ENCODE measurements at regions of chr21 and their contacts with region 1.

Region 1: DNA sequence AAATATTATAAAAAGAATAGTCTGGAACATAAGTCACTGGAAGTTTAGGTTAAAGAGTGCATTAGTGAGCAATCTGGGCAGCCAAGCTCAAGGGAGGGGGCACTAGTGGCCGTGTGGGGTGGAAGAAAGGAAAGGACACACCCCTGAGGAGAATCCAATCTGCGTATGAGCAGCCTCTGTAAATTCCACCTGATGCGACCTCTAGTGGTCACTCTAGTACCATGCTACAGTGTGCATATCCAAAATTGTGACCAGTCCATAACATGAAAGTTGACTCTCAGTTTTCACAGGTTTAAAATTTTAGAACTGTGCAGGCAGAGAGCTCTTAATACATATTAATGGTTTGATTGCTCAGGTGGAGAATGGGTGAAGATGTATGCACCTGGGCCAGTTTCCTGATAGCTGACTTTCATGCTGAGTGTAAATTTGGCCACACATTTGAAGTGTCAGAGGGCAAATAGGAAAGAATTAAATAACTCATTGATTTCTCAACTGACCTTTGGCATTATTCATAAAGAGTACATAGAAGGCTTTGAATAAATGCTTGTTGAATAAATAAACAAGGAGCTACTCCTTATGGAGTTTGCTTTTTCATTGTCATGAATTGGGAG is 105.9 kb upstream of the C21orf91 start:
- DNase-seq: peak in 3 of 6 donors; percentile 25 to 60 (median 31)
- ATAC-seq: peak; percentile 91 to 96 (median 95)
- H3K4me3 ChIP-seq: no peak overlapping the region
- H3K27ac ChIP-seq: no peak overlapping the region
- H3K4me1 ChIP-seq: no peaks in the 10 kb centered on the region
- H3K27me3 ChIP-seq: no peaks in the 10 kb centered on the region
- CTCF ChIP-seq: peak; percentile 57 to 88 (median 81)

Region 2: GRCh38 chr21:17688912-17689874 is 235.9 kb before region 1 on chr21:
- intact Hi-C with region 1: loop called in 1 of 3 experiments (anchors 10 kb)
- DNase-seq: peak in 4 of 6 donors; percentile 13 to 27 (median 22)
- ATAC-seq: peak in 3 of 4 donors; percentile 49 to 75 (median 71)
- H3K4me3 ChIP-seq: no peak overlapping the region
- H3K27ac ChIP-seq: no peak overlapping the region
- H3K4me1 ChIP-seq: no peaks in the 10 kb centered on the region
- H3K27me3 ChIP-seq: no peaks in the 10 kb centered on the region
- CTCF ChIP-seq: no peak

Region 3: DNA sequence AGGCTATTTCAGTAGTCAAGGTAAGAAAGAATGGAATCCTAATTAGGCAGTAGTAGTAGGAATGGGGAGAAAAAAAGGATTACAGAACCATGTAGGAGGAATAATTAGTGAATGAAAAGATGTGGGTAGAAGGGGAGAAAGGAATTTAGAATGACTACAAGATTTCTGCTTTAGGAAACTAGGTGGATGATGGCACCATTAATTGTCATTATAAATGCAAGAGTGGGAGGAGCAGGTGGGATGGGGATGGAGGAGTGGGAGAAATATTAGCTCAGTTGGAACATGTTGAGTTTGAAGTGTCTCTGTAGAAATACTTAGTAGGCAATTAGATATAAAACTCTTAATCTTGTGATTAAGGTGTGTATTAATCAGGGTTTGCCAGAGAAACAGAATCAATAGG is 56.0 kb before region 1 on chr21:
- intact Hi-C with region 1: no loop called
- DNase-seq: no peak
- ATAC-seq: no peak
- H3K4me3 ChIP-seq: no peak overlapping the region
- H3K27ac ChIP-seq: no peak overlapping the region
- H3K4me1 ChIP-seq: no peaks in the 10 kb centered on the region
- H3K27me3 ChIP-seq: no peaks in the 10 kb centered on the region
- CTCF ChIP-seq: no peak

Measured in pancreas (tissue), 10 donors.